ENCODE measurements at regions of chr20 and their contacts with region 1.

Region 1: GRCh38 chr20:50958615-50959542 is at the start of gene MOCS3:
- DNase-seq: peak; percentile 92
- H3K4me3 Mint-ChIP-seq: peak within 1 kb of the TSS; percentile 91
- H3K27ac Mint-ChIP-seq: peak within 1 kb of the TSS; percentile 100
- H3K4me1 Mint-ChIP-seq: peaks cover 15% of the 10 kb centered on the region
- H3K27me3 Mint-ChIP-seq: no peaks in the 10 kb centered on the region
- CTCF ChIP-seq: no peak
- total RNA-seq, gene MOCS3: 5.8 and 6.0 TPM in 2 replicates

Region 2: DNA sequence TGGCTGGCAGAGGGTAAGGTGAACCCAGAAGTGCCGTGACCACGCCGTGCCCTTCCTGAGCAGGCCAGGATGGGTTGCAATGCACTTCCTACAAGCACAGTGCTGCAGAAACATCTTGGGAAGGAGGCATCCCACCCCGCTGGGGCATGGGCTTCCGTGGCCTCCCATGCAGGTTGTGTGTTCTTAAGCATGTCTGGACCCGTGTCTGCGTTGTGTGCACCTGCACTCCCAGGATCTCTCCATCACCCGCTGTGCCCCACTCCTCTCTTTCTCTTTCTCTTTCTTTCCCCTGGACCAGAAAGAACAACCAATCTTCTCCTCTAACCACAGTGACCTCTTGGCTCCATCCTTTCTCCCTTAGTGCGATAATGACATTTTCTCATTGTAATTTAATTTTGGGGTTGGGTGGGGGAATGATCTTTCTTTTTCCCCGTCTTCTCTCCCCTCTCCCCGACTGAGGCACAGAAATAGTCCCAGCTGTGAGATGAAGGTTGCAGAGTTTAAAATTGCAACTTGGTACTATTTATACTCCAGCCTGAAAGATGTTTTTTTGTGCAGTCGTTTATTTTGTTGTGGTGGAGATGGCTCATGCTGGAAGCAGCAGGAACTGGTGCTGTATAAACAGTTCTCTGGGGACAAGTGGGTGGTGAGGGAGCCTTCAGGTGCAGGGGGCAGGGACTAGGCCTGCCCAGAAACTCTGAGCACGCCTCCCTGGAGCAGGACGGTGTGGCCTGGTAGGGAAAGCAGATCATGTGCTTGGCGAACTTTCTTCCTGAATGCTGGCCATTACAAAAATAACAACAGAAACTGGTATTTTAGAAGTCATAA is 143.5 kb before region 1 on chr20:
- CTCF ChIA-PET with region 1: interaction called, 3 read pairs
- POLR2A ChIA-PET with region 1: interaction called, 22 read pairs
- intact Hi-C with region 1: loop called (anchors 1 kb)
- DNase-seq: no peak
- H3K4me3 Mint-ChIP-seq: no peak overlapping the region
- H3K27ac Mint-ChIP-seq: peak overlapping the region; percentile 52
- H3K4me1 Mint-ChIP-seq: peaks cover 16% of the 10 kb centered on the region
- H3K27me3 Mint-ChIP-seq: no peaks in the 10 kb centered on the region
- CTCF ChIP-seq: no peak

Region 3: GRCh38 chr20:50913690-50914375 is 45.0 kb before region 1 on chr20:
- CTCF ChIA-PET with region 1: interaction called, 4 read pairs
- POLR2A ChIA-PET with region 1: interaction called, 32 read pairs
- intact Hi-C with region 1: no loop called
- DNase-seq: peak; percentile 68
- H3K4me3 Mint-ChIP-seq: no peak overlapping the region
- H3K27ac Mint-ChIP-seq: peak overlapping the region; percentile 6
- H3K4me1 Mint-ChIP-seq: peaks cover 57% of the 10 kb centered on the region
- H3K27me3 Mint-ChIP-seq: no peaks in the 10 kb centered on the region
- CTCF ChIP-seq: no peak

Region 4: DNA sequence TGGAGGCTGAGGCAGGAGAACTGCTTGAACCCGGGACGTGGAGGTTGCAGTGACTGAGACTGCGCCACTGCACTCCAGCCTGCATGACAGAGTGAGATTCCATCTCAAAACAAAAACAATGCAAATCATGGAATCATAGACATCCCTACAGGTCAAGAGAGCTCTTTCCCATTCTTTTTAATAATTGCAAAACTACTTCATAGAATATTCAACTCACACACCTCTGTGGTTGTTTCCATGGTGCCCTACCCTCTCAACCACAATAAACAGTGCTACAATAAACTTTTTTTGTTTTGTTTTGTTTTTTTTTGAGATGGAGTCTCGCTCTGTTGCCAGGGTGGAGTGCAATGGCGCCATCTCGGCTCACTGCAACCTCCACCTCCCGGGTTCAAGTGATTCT is 15.8 kb before region 1 on chr20:
- CTCF ChIA-PET with region 1: interaction called, 3 read pairs
- POLR2A ChIA-PET with region 1: interaction called, 32 read pairs
- intact Hi-C with region 1: no loop called
- DNase-seq: no peak
- H3K4me3 Mint-ChIP-seq: no peak overlapping the region
- H3K27ac Mint-ChIP-seq: no peak overlapping the region
- H3K4me1 Mint-ChIP-seq: no peaks in the 10 kb centered on the region
- H3K27me3 Mint-ChIP-seq: no peaks in the 10 kb centered on the region
- CTCF ChIP-seq: no peak

Region 5: GRCh38 chr20:50992733-50993457 is 34.0 kb after region 1 on chr20:
- CTCF ChIA-PET with region 1: interaction called, 3 read pairs
- POLR2A ChIA-PET with region 1: interaction called, 17 read pairs
- intact Hi-C with region 1: no loop called
- DNase-seq: peak; percentile 77
- H3K4me3 Mint-ChIP-seq: no peak overlapping the region
- H3K27ac Mint-ChIP-seq: no peak overlapping the region
- H3K4me1 Mint-ChIP-seq: peaks cover 13% of the 10 kb centered on the region
- H3K27me3 Mint-ChIP-seq: no peaks in the 10 kb centered on the region
- CTCF ChIP-seq: peak; percentile 80

Measured in MCF 10A (cell line).